G401 (cell line): ENCODE measurements at regions of chr3 and their contacts with region 1.

Region 1: DNA sequence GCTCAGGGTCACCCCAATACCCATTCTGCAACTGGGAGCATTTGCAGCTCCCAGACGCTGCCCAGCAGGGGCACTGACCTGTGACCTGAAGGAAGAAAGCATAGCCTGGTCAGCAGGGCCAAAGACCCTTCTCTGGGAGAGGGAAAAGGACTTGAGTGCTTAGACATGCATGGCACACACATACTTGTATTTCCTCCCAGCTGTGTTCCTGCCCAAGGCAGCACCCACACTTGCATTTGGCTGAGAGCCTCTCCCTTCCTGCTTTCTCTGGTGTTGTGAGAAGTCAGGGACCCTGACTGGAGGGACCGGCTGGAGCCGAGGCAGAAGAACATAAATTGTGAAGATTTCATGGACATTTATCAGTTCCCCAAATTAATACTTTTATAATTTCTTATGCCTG is 7.2 kb upstream of the LAMB2 start:
- DNase-seq: no peak

Region 2: GRCh38 chr3:49248846-49249238 is 108.8 kb after region 1 on chr3:
- in situ Hi-C with region 1: no loop called
- DNase-seq: no peak

Region 3: DNA sequence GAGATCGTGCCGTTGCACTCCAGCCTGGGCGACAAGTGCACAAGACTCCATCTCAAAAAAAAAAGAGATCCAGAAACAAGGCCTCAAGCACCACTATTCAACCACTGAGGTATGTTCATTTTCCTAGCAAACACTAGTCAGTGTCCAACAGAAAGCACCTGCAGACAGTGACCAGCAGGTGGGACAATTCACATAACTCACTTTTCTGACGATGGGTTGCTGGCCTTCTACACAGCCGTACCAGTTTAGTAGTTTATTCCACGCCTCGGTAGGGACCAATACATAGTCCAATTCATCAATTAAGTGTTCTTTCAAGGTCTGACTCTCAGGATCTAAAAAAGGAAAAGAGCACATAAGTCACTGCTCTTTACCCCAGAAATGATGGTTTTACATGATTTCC is 187.4 kb after region 1 on chr3:
- in situ Hi-C with region 1: loop called (anchors 10 kb)
- DNase-seq: no peak

Region 4: DNA sequence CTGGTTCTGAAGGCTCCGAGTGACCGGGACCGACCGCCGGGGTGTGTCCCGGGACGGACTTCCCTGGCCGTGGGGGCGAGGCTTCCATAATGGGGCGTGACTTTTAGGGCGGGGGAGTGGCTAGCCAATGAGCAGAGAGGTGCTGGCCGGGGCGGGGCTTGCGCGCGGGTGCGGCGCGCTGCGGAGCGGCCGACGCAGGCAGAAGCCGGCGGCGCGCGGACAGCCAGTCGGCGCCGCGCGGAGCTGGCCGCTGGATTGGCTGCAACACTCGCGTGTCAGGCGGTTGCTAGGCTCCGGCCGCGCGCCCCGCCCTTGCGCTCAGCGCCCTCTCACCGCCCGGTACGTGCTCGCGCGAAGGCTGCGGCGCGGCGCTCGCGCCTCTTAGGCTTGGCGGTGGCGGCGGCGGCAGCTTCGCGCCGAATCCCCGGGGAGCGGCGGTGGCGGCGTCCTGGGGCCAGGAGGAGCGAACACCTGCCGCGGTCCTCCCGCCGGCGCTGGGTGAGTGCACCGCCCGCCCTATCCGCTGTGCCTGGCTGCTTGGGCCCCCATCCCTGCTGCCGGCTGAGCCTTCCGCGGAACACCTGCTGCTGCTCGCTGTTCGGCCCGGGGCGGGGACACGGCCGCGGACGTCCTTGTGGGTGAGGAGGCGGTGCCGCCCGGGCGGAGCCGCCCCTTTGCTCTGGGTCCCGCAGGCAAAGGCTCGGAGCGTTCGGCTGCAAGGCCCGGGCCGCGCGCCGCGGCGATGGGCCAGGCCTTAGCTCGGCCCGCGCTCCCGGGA is 330.0 kb after region 1 on chr3 and contains the start of gene DAG1:
- in situ Hi-C with region 1: no loop called
- DNase-seq: peak; percentile 95
- total RNA-seq, gene DAG1: 91.3 and 143 TPM in 2 replicates